ENCODE measurements at regions of chr1 and their contacts with region 1.

Region 1: GRCh38 chr1:10941891-10942541 is 70.4 kb upstream of the TARDBP start:
- DNase-seq: peak; percentile 86
- ATAC-seq: peak; percentile 73
- H3K4me3 Mint-ChIP-seq: no peak overlapping the region; the same call in 1 of the 2 replicates
- H3K27ac Mint-ChIP-seq: no peak overlapping the region
- H3K4me1 Mint-ChIP-seq: peaks cover 26% of the 10 kb centered on the region
- H3K27me3 Mint-ChIP-seq: peaks cover 8% of the 10 kb centered on the region
- CTCF ChIP-seq: peak; percentile 96

Region 2: DNA sequence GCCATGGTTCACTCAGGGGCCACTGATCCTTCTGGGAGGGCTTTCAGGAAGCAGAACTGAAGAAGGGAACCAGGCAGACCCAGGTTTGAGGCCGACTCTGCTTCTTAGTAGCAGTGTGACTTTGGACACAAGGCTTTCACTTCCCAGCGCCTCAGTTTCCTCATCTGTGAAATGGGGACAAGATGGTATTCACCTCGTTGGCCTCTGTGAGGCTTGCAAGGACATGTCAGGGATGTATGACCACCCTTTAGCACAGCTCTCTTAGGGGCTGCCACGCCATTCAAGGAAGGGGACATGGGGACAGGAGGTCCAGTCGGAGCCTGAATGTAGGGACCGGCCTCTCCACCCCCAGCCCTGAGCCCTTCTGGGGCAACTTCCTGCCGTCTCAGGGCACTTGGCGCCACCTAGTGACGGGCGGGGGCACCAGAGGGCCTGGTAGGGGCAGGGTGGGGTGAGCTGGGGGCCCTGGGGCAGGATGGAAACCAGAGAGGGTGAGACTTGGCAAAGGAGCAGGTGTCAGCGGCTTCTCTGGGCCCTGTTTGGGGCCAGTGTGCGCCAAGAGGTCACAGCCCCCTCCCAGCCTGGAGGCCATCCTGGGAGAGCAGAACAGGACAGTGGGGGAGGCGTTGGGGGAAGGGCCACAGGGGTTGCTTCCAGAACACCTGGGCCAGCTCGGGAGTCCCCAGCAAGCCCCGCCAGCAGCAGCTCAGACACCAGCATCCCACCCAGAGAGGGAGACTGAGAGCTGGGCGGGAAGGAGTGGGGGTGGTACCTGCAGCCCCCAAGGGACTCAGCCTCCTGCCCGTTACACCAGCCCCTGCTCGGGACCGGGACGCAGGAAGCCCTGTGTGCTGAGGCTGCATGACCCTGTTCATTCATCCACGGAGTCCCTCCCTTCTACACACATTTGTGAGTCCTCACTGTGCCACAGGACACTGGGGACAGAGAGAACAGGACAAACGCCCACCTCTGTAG is 32.0 kb before region 1 on chr1:
- CTCF ChIA-PET with region 1: interaction called, 11 read pairs
- POLR2A ChIA-PET with region 1: no interaction called
- DNase-seq: peak; percentile 92
- ATAC-seq: peak; percentile 87
- H3K4me3 Mint-ChIP-seq: no peak overlapping the region
- H3K27ac Mint-ChIP-seq: no peak overlapping the region
- H3K4me1 Mint-ChIP-seq: peaks cover 26% of the 10 kb centered on the region
- H3K27me3 Mint-ChIP-seq: no peaks in the 10 kb centered on the region; the same call in 1 of the 2 replicates
- CTCF ChIP-seq: peak; percentile 71; the same call in 1 of the 2 replicates

Region 3: DNA sequence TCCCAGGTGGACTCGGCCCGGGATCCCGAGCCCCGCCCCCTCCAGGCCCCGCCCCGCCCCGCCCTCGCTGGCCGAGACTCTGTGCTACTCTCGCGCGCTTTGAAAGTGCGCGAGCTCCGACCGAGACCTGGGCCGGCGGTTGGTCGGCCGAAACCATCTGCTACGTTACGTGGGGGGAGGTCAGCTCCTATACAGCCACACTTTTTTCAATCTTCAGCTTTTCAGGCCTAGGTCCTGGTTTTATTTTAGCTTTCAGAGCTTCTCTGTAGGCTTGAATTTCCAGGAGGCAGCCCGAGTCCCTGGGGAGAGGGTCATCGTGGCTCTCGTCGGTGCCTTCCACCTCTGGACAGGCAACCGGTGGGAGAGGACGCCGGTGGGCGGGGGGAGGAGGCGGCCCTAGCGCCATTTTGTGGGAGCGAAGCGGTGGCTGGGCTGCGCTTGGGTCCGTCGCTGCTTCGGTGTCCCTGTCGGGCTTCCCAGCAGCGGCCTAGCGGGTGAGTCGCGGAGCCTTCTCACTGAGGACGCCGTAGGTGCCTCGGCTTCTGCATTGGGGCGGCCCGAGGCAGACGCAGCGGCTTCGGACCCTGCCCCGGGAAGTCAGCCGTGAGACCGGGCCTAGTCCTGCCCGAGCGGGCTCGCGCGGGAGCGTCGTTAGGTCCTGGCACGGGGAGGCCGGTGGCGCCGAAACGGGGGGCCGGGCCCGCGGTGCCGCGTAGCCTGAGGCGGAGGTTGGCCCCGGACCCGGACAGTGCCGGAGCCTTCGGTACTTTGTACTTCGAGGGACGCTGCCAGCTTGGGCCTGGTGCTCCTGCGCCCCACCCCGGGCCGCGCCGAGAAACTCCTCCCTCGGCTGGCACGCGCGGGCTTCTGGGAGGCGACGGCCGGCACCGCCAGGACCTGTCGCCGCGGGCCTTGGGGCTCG is 70.5 kb after region 1 on chr1 and contains the start of gene TARDBP:
- CTCF ChIA-PET with region 1: no interaction called
- POLR2A ChIA-PET with region 1: no interaction called
- DNase-seq: peak; percentile 89
- ATAC-seq: peak; percentile 92
- H3K4me3 Mint-ChIP-seq: peak within 1 kb of the TSS; percentile 91
- H3K27ac Mint-ChIP-seq: peak within 1 kb of the TSS; percentile 99
- H3K4me1 Mint-ChIP-seq: peaks cover 22% of the 10 kb centered on the region
- H3K27me3 Mint-ChIP-seq: no peaks in the 10 kb centered on the region
- CTCF ChIP-seq: no peak
- total RNA-seq, gene TARDBP: 185 to 228 TPM (median 197 TPM) in 3 replicates